HepG2 (cell line): ENCODE measurements at regions of chr11 and their contacts with region 1.

Region 1: DNA sequence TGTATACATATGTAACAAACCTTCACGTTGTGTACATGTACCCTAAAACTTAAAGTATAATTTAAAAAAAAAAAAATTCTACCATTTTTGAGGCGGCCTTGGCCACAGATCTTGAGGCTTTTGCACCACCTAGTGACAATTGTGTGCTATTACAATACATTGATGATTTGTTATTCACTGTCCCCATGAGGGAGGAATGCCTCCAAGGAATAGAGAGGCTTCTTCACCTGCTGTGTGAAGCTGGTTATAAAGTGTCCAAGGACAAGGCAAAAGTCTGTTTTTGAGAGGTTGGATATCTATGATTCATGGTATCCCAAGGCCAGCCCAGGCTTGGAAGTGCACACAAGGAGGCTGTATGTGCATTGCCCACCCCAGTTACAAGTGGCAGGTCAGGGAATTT is 30.7 kb downstream of the SLC22A25 start:
- DNase-seq: peak; percentile 10
- ATAC-seq: no peak
- H3K4me3 ChIP-seq: no peak overlapping the region
- H3K27ac ChIP-seq: no peak overlapping the region
- H3K4me1 ChIP-seq: peaks cover 22% of the 10 kb centered on the region
- H3K27me3 ChIP-seq: no peaks in the 10 kb centered on the region
- CTCF ChIP-seq: peak; percentile 42
- EP300 ChIP-seq: no peak
- POLR2A ChIP-seq: no peak
- RAD21 ChIP-seq: 0 out of 2 replicates have a peak, but pooled peaks have one; percentile 17

Region 2: GRCh38 chr11:63042596-63042995 is 170.1 kb before region 1 on chr11:
- CTCF ChIA-PET with region 1: no interaction called
- POLR2A ChIA-PET with region 1: no interaction called
- in situ Hi-C with region 1: loop called (anchors 25 kb)
- intact Hi-C with region 1: loop called (anchors 5 kb)
- DNase-seq: no peak
- ATAC-seq: no peak
- H3K4me3 ChIP-seq: no peak overlapping the region
- H3K27ac ChIP-seq: no peak overlapping the region
- H3K4me1 ChIP-seq: no peaks in the 10 kb centered on the region
- H3K27me3 ChIP-seq: no peaks in the 10 kb centered on the region
- CTCF ChIP-seq: no peak
- EP300 ChIP-seq: no peak
- POLR2A ChIP-seq: no peak
- RAD21 ChIP-seq: no peak

Region 3: DNA sequence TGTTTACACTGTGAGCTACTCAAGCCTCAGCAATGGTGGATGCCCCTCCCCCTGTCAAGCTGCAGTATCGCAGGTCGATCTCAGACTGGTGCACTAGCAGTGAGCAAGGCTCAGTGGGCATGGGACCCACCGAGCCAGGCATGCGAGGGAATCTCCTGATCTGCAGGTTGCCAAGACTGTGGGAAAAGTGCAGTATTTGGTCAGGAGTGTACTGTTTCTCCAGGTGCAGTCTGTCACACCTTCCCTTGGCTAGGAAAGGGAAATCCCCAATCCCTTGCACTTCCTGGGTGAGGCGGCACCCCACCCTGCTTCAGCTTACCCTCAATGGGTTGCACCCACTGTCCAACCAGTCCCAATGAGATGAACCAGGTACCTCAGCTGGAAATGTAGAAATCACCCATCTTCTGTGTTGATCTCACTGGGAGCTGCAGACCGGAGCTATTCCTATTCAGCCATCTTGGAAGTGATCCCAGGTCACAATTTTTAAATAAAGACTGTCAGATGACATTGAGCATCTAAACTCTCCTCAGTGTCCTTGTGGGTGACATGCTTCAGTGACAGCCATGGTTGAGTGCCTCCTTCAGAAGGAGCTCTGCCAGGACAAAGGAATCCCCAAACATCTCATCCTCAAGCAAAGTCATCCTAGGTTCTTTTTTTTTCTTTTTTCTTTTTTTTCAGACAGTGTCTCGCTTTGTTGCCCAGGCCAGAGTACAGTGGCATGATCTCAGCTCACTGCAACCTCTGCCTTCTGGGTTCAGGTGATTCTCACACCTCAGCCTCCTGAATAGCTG is 79.6 kb before region 1 on chr11:
- CTCF ChIA-PET with region 1: interaction called, 10 read pairs
- POLR2A ChIA-PET with region 1: no interaction called
- in situ Hi-C with region 1: no loop called
- intact Hi-C with region 1: no loop called
- DNase-seq: no peak
- ATAC-seq: no peak
- H3K4me3 ChIP-seq: no peak overlapping the region
- H3K27ac ChIP-seq: no peak overlapping the region
- H3K4me1 ChIP-seq: no peaks in the 10 kb centered on the region
- H3K27me3 ChIP-seq: no peaks in the 10 kb centered on the region; a peak in 1 of 5 replicates
- CTCF ChIP-seq: no peak
- EP300 ChIP-seq: no peak
- POLR2A ChIP-seq: no peak
- RAD21 ChIP-seq: no peak

Region 4: DNA sequence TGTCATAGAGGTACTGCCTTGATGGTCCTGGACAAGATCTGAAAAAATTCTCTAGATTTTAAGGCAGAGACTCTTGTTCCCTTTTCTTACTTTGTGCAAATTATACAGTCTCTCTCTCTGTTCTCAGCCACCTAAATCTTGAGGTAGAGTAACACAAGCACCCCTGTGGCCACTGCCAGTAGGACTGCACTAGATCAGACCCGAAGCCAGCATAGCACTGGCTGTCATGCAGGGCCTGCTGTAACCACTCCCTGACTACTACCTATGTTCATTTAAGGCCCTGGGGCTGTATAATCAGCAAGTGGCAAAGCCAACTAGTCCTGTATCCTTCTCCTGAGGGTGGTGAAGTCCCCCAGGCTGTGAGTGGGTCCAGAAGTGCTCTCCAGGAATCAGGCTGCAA is 56.9 kb before region 1 on chr11:
- CTCF ChIA-PET with region 1: no interaction called
- POLR2A ChIA-PET with region 1: no interaction called
- in situ Hi-C with region 1: no loop called
- intact Hi-C with region 1: no loop called
- DNase-seq: no peak
- ATAC-seq: no peak
- H3K4me3 ChIP-seq: no peak overlapping the region
- H3K27ac ChIP-seq: no peak overlapping the region
- H3K4me1 ChIP-seq: no peaks in the 10 kb centered on the region
- H3K27me3 ChIP-seq: peaks cover 0 to 6% of the 10 kb centered on the region in 2 experiments; a peak in 2 of 5 replicates
- CTCF ChIP-seq: no peak
- EP300 ChIP-seq: no peak
- POLR2A ChIP-seq: no peak
- RAD21 ChIP-seq: no peak